ENCODE measurements at regions of chr17 and their contacts with region 1.

Region 1: GRCh38 chr17:17812211-17813057 is 24.4 kb downstream of the SREBF1 start:
- DNase-seq: peak in 8 of 10 donors; percentile 62 to 80 (median 72)
- H3K4me3 ChIP-seq: peak overlapping the region in 2 of 59 donors; percentile 0 to 2
- H3K27ac ChIP-seq: peak overlapping the region in 58 of 59 donors; percentile 18 to 99 (median 82)
- H3K27me3 ChIP-seq: no peaks in the 10 kb centered on the region
- CTCF ChIP-seq: peak; percentile 97 to 100 (median 100)

Region 2: DNA sequence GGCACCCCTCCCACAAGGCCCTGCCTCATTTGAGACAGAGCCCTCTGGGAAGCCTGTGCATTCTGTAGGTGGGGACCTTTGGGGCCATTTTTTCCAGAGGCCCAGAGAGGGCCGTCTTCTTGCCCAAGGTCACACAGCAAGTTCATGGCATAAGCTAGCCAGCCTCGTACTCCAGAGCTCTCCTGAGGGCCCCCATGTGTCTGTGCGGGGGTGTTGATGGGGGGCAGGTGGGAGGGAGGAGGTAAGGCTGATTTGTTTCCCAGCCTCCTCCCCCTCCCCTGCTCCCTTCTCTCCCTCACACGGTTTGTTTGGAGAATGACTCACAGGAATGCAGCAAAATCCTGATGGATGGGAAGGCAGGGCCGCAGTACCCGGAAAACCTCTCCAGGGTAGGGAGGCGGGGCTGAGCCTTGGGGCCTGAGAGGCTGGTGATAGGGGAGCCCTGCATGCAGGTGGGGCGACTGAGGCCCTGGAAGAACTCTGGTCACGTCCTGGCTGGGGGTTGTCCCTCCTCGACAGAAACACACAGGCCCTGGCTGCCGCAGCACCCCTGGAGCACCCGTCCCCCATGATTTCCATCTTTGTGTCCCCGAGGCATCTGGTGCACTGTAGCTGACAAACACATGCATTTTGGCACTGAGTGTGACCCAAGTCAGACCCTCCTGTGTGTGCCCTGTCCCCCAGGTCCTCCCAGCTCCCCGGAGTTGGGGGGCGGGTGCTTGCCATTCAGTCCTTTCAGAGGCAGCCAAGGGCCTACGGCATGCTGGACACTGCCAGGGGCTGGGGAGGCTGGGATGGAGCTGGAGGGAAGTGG is 101.5 kb before region 1 on chr17:
- intact Hi-C with region 1: no loop called
- DNase-seq: peak in 6 of 10 donors; percentile 55 to 84 (median 68)
- H3K4me3 ChIP-seq: peak overlapping the region in 5 of 59 donors; percentile 2 to 14 (median 11)
- H3K27ac ChIP-seq: peak overlapping the region in 58 of 59 donors; percentile 33 to 91 (median 82)
- H3K27me3 ChIP-seq: no peaks in the 10 kb centered on the region
- CTCF ChIP-seq: no peak

Region 3: DNA sequence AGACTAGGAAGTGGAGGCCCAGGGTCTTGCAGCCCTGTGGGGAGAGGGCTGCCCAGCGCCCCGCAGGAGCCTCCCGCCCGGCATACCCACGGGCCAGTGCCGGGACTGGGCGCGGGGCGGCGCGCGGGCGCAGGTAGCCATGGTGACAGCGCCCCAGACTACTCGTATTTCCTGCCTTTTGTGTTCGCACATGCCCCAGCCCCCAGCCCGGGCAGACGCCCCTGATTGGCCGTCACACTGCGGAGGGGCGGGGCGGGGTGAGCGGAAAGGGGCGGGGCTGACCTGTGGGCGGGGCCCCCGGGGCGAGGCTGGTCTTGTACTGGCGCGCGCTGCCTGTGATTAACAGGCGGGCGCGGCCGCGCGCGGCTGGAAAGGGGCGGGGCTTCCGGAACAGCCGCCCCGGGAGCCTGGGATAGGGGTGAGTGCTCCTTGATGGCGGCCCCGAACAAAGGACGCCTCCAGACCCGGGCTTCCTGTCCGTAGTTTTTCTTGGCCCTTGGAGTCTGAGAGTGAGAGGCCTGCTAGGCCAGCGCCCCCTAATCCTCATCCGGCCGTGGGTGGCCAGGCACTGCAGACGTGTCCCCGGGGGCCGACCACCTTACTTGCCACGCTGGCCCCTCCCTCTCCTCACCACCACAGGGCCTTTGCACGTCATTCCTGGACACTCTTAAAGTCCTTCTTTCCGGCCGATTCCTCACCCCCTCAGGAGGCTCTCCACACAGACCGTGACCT is 60.2 kb before region 1 on chr17:
- intact Hi-C with region 1: no loop called
- DNase-seq: peak; percentile 83 to 94 (median 92)
- H3K4me3 ChIP-seq: peak overlapping the region; percentile 4 to 70 (median 54)
- H3K27ac ChIP-seq: peak overlapping the region; percentile 28 to 100 (median 89)
- H3K27me3 ChIP-seq: no peaks in the 10 kb centered on the region
- CTCF ChIP-seq: peak in 51 of 56 donors; percentile 6 to 69 (median 46)

Region 4: DNA sequence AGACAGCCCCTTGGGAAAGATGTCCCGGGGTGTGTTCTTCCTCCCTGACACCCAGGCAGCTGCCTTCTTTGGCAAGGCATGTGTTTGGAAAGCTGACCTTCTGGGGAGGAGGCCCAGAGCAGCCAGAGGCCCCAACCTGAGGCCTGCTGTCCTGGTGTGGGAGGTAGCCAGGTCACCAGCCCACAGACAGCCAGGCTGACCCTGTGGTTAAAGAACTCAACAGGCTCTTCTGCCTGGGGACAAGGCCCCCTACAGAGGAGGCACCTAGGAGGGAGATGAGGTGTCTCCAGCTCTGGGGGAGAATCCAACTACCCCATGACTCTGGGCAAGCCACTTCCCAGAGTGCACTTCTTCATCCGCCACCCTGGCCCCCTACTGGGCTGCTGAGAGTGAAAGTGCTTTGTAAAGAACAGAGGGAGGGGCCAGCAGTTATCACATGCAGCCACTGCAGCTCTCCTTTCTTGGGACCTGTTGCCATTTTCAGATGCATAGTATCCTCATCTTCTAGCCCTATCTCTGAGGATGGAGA is 37.5 kb after region 1 on chr17:
- intact Hi-C with region 1: loop called in 1 of 2 experiments (anchors 5 kb)
- DNase-seq: peak in 2 of 10 donors; percentile 54 to 56
- H3K4me3 ChIP-seq: no peak overlapping the region
- H3K27ac ChIP-seq: peak overlapping the region; percentile 52 to 97 (median 86)
- H3K27me3 ChIP-seq: no peaks in the 10 kb centered on the region
- CTCF ChIP-seq: peak in 46 of 56 donors; percentile 9 to 62 (median 37)

Region 5: GRCh38 chr17:17859909-17860765 is 47.7 kb after region 1 on chr17:
- intact Hi-C with region 1: loop called (anchors 2 to 5 kb)
- DNase-seq: peak in 9 of 10 donors; percentile 65 to 83 (median 76)
- H3K4me3 ChIP-seq: no peak overlapping the region
- H3K27ac ChIP-seq: peak overlapping the region in 51 of 59 donors; percentile 5 to 79 (median 60)
- H3K27me3 ChIP-seq: no peaks in the 10 kb centered on the region
- CTCF ChIP-seq: peak; percentile 77 to 100 (median 97)

Region 6: DNA sequence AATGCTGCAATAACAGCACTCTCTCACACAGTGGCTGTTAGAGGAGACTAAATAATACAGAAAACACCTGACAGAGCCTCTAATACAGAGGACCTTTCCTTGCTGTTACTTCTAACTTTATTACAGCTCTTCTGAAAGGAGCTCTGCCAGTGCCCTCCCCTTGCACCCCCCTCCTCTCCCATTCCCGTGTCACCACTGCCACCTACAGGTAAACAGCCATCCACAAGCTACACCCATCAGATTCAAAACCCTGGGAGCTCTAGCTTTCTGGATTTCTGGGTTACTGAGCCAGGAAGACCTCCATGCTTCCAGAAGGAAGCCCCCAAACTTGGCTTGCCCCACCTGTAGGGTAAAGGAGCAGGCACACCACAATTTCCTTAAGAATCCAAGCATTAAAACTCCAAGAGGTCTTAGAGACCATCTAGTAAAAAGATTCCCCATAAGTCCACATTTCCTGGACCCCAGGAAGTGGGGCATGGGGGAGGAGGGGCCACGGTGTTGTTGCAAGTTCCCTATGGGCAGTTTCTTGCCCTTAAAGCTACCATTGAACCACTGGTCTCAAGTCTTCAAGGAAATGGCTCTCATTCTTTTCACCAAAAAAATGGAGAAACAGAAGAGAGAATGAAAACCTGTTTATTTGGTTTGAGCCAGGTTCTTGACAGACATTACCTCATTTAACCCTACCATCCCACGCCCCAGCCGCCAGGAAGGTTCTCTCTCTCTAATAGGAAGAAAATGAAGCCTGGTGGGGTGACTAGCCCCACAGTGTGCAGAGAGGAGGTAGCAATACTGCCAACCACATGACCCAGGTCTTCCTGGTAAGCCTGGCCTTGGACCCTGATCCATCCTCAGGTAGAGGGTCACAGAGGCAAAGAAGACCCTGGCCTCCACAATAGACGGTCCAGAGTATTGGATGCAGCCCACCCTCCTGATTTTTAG is 107.0 kb after region 1 on chr17:
- intact Hi-C with region 1: loop called (anchors 2 to 10 kb)
- DNase-seq: peak; percentile 40 to 81 (median 78)
- H3K4me3 ChIP-seq: no peak overlapping the region
- H3K27ac ChIP-seq: peak overlapping the region in 52 of 59 donors; percentile 24 to 99 (median 90)
- H3K27me3 ChIP-seq: no peaks in the 10 kb centered on the region
- CTCF ChIP-seq: peak in 55 of 56 donors; percentile 33 to 88 (median 74)

Region 7: GRCh38 chr17:18038861-18039534 is 226.6 kb after region 1 on chr17 and contains the starts of genes ATPAF2 and GID4:
- intact Hi-C with region 1: loop called (anchors 5 kb)
- DNase-seq: peak; percentile 99 to 100 (median 100)
- H3K4me3 ChIP-seq: peak within 1 kb of the TSS; percentile 67 to 100 (median 94)
- H3K27ac ChIP-seq: peak within 1 kb of the TSS in 57 of 59 donors; percentile 49 to 93 (median 84)
- H3K27me3 ChIP-seq: no peaks in the 10 kb centered on the region
- CTCF ChIP-seq: peak in 33 of 56 donors; percentile 13 to 56 (median 28)
- total RNA-seq, gene ATPAF2: 23.1 to 61.4 (median 36.3) TPM
- total RNA-seq, gene GID4: 10.2 to 20.5 (median 15.2) TPM